Transverse colon (tissue), 4 donors: ENCODE measurements at regions of chrX and their contacts with region 1.

Region 1: GRCh38 chrX:8743126-8743732 is 11.3 kb upstream of the ANOS1 start:
- DNase-seq: peak; percentile 67
- H3K4me3 ChIP-seq: no peak overlapping the region
- H3K27ac ChIP-seq: no peak overlapping the region
- H3K4me1 ChIP-seq: no peaks in the 10 kb centered on the region
- H3K27me3 ChIP-seq: no peaks in the 10 kb centered on the region
- CTCF ChIP-seq: peak; percentile 38 to 69 (median 62)
- EP300 ChIP-seq: no peak
- POLR2A ChIP-seq: no peak

Region 2: DNA sequence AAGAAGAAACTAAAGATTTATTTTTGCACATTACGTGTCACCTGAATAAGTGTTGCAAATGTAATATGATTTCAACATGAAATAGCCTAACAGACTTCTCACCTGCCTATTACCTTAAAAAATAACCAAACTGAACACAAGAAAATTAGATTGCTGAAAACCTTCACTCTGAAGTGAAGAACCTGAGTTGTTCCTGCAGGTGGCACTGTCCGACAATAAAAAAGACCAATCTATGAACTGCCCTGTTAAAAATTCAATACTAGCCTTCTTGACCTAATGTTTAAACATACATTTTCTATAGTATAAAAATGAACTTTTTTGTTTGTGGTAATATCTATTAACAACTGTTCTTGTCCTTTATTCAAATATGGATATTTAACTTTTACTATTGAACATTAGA is 746.8 kb before region 1 on chrX:
- in situ Hi-C with region 1: loop called (anchors 10 to 25 kb)
- intact Hi-C with region 1: loop called (anchors 5 kb)
- DNase-seq: peak; percentile 21
- H3K4me3 ChIP-seq: no peak overlapping the region
- H3K27ac ChIP-seq: no peak overlapping the region
- H3K4me1 ChIP-seq: no peaks in the 10 kb centered on the region
- H3K27me3 ChIP-seq: no peaks in the 10 kb centered on the region
- CTCF ChIP-seq: peak; percentile 41 to 61 (median 49)
- EP300 ChIP-seq: no peak
- POLR2A ChIP-seq: no peak

Region 3: GRCh38 chrX:8805046-8805445 is 61.8 kb after region 1 on chrX:
- in situ Hi-C with region 1: no loop called
- intact Hi-C with region 1: no loop called
- DNase-seq: no peak
- H3K4me3 ChIP-seq: no peak overlapping the region
- H3K27ac ChIP-seq: no peak overlapping the region
- H3K4me1 ChIP-seq: no peaks in the 10 kb centered on the region
- H3K27me3 ChIP-seq: no peaks in the 10 kb centered on the region
- CTCF ChIP-seq: no peak
- EP300 ChIP-seq: no peak
- POLR2A ChIP-seq: no peak